ENCODE measurements at regions of chr3 and their contacts with region 1.

Region 1: DNA sequence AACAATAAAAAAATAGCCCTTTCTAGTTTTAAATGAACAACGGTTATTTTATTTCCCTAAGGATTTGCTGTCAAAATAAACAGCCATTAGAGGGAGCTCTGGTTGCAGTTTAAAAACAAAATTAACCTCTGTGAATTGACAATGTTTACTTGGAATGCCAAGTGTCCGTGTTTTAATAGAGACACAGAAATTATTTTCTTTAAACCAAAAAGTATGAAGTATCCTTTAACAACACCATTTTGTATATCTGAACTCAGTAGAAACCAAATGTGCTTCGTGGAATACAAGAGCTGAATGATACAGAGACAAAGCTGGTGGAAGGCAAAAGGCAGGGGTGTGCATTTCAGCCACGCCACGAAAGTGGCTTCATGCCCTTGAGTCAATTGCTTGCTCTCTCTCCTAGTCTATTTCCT is 74.4 kb downstream of the MOBP start:
- DNase-seq: peak in 2 of 4 experiments; percentile 33 to 37
- ATAC-seq: peak; percentile 47; the same call in 2 of the 3 replicates
- H3K4me3 ChIP-seq: no peak overlapping the region
- H3K27ac ChIP-seq: no peak overlapping the region
- H3K4me1 ChIP-seq: no peaks in the 10 kb centered on the region
- H3K27me3 ChIP-seq: no peaks in the 10 kb centered on the region
- CTCF ChIP-seq: peak; percentile 51 to 86 (median 58); a peak in 4 of 6 replicates
- EP300 ChIP-seq: no peak
- POLR2A ChIP-seq: no peak
- RAD21 ChIP-seq: peak; percentile 87 to 92

Region 2: GRCh38 chr3:39473452-39474127 is 68.3 kb before region 1 on chr3:
- CTCF ChIA-PET with region 1: no interaction called
- POLR2A ChIA-PET with region 1: no interaction called
- in situ Hi-C with region 1: no loop called
- intact Hi-C with region 1: no loop called
- DNase-seq: no peak
- ATAC-seq: no peak
- H3K4me3 ChIP-seq: no peak overlapping the region
- H3K27ac ChIP-seq: no peak overlapping the region
- H3K4me1 ChIP-seq: no peaks in the 10 kb centered on the region
- H3K27me3 ChIP-seq: peaks cover 2 to 12% of the 10 kb centered on the region in 2 experiments; a peak in 2 of 5 replicates
- CTCF ChIP-seq: no peak
- EP300 ChIP-seq: no peak
- POLR2A ChIP-seq: no peak
- RAD21 ChIP-seq: no peak

Region 3: GRCh38 chr3:39529600-39529999 is 12.3 kb before region 1 on chr3:
- CTCF ChIA-PET with region 1: no interaction called
- POLR2A ChIA-PET with region 1: interaction called, 11 read pairs
- in situ Hi-C with region 1: no loop called
- intact Hi-C with region 1: no loop called
- DNase-seq: no peak
- ATAC-seq: peak; percentile 45; the same call in 1 of the 3 replicates
- H3K4me3 ChIP-seq: no peak overlapping the region
- H3K27ac ChIP-seq: no peak overlapping the region
- H3K4me1 ChIP-seq: no peaks in the 10 kb centered on the region
- H3K27me3 ChIP-seq: peaks cover 2 to 17% of the 10 kb centered on the region in 2 experiments; a peak in 1 of 5 replicates
- CTCF ChIP-seq: no peak
- EP300 ChIP-seq: no peak
- POLR2A ChIP-seq: no peak
- RAD21 ChIP-seq: no peak

Region 4: GRCh38 chr3:39724233-39724846 is 182.4 kb after region 1 on chr3:
- CTCF ChIA-PET with region 1: interaction called, 7 read pairs
- POLR2A ChIA-PET with region 1: no interaction called
- in situ Hi-C with region 1: no loop called
- intact Hi-C with region 1: loop called (anchors 5 kb)
- DNase-seq: peak in 2 of 4 experiments; percentile 8 to 15
- ATAC-seq: peak; percentile 71
- H3K4me3 ChIP-seq: no peak overlapping the region
- H3K27ac ChIP-seq: no peak overlapping the region
- H3K4me1 ChIP-seq: no peaks in the 10 kb centered on the region
- H3K27me3 ChIP-seq: no peaks in the 10 kb centered on the region; a peak in 1 of 5 replicates
- CTCF ChIP-seq: peak; percentile 31 to 59 (median 37); a peak in 3 of 6 replicates
- EP300 ChIP-seq: no peak
- POLR2A ChIP-seq: no peak
- RAD21 ChIP-seq: peak; percentile 55 to 63

Region 5: DNA sequence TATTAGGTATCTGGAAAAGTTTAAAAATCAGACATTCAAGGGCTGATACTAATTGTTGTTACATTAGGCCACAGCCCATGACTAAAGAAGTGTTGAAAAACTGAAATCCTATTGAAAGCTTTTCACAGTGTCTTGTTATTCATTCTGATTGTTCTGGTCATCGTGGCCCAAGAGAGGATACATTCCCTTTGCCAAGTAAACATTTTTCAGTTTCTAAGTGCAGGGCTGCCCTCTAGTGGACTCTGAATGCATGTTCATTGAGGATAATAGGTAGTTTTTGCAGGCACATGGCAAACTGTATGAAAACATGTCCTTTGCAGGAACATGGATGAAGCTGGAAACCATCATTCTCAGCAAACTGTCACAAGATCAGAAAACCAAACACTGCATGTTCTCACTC is 448.6 kb after region 1 on chr3:
- CTCF ChIA-PET with region 1: interaction called, 10 read pairs
- POLR2A ChIA-PET with region 1: no interaction called
- in situ Hi-C with region 1: no loop called
- intact Hi-C with region 1: loop called (anchors 1 kb)
- DNase-seq: peak; percentile 70 to 76 (median 72)
- ATAC-seq: peak; percentile 90
- H3K4me3 ChIP-seq: no peak overlapping the region
- H3K27ac ChIP-seq: no peak overlapping the region
- H3K4me1 ChIP-seq: no peaks in the 10 kb centered on the region
- H3K27me3 ChIP-seq: no peaks in the 10 kb centered on the region
- CTCF ChIP-seq: peak; percentile 71 to 82 (median 72)
- EP300 ChIP-seq: no peak
- POLR2A ChIP-seq: no peak
- RAD21 ChIP-seq: peak; percentile 74 to 91

Region 6: DNA sequence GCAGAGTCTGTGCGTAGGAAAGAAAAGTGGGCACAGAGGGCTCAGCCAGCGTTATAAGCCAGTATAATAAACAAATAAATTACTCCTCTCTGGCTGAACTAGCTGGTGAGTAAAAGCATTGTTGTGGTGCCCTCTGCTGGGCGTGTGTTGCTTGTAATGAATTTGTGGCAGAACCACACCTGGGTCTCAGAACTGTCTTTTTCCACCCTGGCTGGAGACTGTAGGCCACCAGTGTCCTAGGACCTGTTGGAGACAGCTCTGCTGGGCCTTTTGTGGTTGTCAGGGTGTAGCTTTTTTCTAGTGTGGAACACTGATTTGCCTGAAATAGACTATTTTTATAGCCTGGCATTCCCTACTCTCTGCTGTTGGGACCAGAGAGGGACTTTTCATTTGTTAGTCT is 637.1 kb after region 1 on chr3:
- CTCF ChIA-PET with region 1: interaction called, 3 read pairs
- POLR2A ChIA-PET with region 1: no interaction called
- in situ Hi-C with region 1: loop called (anchors 10 kb)
- intact Hi-C with region 1: loop called (anchors 5 kb)
- DNase-seq: peak; percentile 58 to 79 (median 58)
- ATAC-seq: peak; percentile 91
- H3K4me3 ChIP-seq: no peak overlapping the region
- H3K27ac ChIP-seq: no peak overlapping the region
- H3K4me1 ChIP-seq: no peaks in the 10 kb centered on the region
- H3K27me3 ChIP-seq: peaks cover 6 to 15% of the 10 kb centered on the region in 2 experiments; a peak in 2 of 5 replicates
- CTCF ChIP-seq: peak; percentile 78 to 88 (median 83)
- EP300 ChIP-seq: no peak
- POLR2A ChIP-seq: no peak
- RAD21 ChIP-seq: peak; percentile 73 to 84

Region 7: DNA sequence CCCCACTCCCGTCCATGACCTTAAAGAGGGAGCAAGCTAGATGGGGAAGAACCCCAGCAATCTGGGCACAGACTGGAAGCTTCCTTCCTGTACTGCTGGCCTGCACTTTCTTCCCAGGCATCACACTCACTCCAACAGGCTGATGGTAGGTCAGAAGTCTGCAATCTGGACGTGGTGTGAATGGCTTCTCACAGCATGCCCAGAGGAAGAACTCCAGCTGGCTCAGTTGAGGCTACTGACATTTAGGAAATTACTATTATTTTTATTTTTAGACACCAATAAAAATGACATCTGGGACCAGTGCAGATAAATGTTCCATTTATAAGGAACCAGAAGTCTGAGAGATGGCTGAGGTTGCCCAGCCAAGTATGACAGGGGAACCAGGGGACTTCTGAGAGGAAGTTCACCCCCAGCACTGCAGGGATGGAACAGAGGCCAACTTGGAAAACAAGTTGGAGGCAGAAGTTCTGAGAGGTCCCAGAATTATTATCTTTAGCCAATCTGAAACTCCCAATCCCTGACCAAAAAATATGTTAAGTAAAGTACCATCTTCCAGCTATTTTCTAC is 1493.6 kb after region 1 on chr3:
- CTCF ChIA-PET with region 1: no interaction called
- POLR2A ChIA-PET with region 1: no interaction called
- in situ Hi-C with region 1: no loop called
- intact Hi-C with region 1: no loop called
- DNase-seq: no peak
- ATAC-seq: no peak
- H3K4me3 ChIP-seq: no peak overlapping the region
- H3K27ac ChIP-seq: no peak overlapping the region
- H3K4me1 ChIP-seq: no peaks in the 10 kb centered on the region
- H3K27me3 ChIP-seq: peaks cover 5 to 13% of the 10 kb centered on the region in 2 experiments; a peak in 3 of 5 replicates
- CTCF ChIP-seq: no peak
- EP300 ChIP-seq: no peak
- POLR2A ChIP-seq: no peak
- RAD21 ChIP-seq: no peak